ENCODE measurements at regions of chr15 and their contacts with region 1.

Region 1: DNA sequence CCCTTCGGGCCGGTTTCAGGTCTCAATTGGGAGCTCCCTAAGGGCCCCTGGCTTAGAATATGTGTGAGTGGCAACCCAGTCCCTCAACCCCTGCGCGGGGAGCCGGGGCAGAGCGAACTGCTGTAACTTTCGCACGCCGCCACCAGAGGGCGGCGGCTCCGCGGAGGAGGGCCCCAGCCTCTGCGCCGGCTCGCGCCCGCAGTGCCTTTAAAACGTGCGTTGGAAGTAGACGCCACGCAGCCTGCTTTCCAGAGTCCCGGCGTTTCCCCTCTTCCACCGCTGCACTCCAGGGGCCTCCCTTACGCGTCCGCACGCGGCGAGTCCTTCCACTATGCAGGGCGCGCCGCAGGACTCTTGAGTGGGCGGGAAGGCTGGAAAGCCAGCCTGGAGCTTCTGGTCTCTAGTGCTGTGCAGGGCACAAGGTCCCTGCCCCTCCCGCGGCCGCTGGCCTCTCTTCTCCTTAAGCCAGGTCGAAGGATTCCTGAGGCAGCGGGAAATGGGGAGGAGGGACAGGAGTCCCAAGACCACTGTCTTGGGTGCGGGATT is 23.7 kb upstream of the RNU6-1 start:
- DNase-seq: peak; percentile 95

Region 2: DNA sequence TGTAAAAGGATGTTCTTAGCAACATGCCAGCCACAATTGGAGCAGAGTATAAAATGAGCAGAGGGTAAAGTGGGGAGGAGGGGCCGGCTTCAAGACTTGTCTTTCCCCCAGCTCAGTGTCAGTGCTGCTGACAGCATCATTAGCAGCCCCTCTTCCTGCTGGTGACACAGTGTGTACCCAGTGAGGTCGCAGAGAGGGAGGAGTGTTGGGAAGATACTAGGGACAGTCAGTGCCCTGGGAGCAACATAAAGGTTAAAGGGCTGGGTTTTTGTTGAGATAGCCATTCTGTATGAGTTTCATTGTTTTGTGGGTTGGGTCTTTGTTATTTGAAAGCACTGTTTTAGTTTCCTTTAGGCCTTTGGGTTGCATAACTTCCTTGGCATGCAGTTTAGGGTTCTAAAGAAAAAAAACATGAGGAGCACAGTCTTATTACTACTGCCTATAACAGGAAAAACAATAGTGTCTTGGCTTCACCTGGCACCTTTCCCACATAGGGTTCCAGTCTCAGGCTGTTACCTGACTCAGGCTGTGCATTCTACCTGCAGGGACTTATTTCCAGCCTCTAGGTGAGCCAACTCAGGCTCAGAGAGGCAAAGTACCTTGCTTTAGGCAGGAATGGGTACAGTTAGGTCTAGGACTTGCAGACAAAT is 132.3 kb before region 1 on chr15:
- intact Hi-C with region 1: no loop called
- DNase-seq: no peak

Region 3: GRCh38 chr15:67803996-67804843 is 59.3 kb before region 1 on chr15:
- intact Hi-C with region 1: no loop called
- DNase-seq: no peak

Region 4: DNA sequence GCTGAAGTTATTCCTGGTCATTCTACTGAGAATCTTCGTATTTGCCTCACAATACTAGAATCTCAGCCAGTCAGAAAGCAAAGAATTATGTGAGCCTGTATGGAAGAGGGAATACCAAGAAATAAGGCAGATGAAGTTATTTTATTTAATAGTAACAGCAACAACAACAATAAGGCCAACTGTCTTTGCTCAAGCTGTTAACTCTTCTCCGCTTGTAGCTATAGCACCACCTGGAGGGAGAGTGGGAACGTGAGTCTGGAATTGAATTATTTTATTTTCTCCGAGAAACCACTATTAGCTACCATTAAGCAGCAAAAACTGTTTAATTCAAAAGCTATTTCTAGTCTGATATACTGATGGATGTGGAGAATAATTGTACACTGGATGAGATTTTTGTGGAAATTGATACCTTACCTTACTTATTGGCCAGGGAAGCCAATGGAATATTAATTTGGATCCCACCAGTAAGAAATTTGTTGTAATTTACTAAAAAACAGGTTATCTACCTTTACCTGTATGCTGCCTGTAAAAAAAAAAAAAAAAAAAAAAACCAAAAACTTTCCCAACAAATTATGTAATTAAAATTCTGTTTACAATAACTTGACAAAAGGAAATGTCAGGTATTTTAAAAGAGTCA is 291.5 kb after region 1 on chr15:
- intact Hi-C with region 1: loop called (anchors 2 to 10 kb)
- DNase-seq: no peak

Region 5: DNA sequence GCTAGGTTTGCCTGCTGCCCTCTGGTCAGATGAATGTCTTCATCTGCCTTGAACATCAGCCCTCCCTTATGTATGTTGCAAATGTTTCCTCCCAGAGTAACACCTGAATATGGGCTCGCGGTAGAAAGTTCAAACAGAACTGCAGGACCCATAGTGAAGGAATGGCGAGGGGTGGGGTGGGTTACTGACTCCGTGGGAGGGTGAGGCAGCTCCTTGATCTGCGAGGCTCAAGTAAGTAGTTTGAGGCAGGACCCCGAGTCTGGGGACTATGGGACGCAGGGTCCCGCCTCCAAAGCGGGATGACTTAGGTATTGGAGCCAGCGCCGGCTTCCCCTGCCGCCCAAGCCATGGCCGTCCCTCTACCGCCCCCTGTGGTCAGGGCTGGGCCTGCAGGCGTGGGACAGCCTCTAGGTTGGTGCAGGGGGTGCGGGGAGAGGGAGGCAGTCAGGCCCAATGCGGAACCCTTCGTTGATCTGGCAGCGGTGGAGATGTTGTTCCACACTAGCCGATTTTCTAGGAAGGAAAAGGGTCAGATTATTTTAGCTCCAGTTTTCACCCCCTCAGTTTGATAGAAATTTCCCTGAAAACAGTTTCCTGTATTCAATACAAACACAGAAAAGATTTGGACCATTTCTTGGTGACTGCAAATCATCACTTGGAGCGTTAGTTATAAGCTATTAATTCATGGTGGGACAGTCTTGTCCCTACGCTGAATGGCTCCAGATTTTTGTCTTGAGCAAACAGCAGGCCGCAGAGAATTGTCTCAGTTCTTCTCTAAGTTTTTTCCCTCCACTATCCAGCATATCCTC is 787.6 kb after region 1 on chr15:
- intact Hi-C with region 1: no loop called
- DNase-seq: peak; percentile 86

Measured in posterior vena cava (tissue), 2 donors.